Activated CD4-positive, alpha-beta T cell treated with anti-CD3 and anti-CD28 coated beads, Interleukin-2, amount 10 ng/mL, durations not matched to agents 24 days and 14 days (primary cell): ENCODE measurements at regions of chr3 and their contacts with region 1.

Region 1: GRCh38 chr3:107235928-107236315 is 141.3 kb upstream of the CCDC54 start:
- DNase-seq: peak; percentile 88
- H3K4me3 Mint-ChIP-seq: peak overlapping the region; percentile 71
- H3K27ac Mint-ChIP-seq: no peak overlapping the region
- H3K4me1 Mint-ChIP-seq: peaks cover 11% of the 10 kb centered on the region
- H3K27me3 Mint-ChIP-seq: peaks cover 17% of the 10 kb centered on the region

Region 2: GRCh38 chr3:107271787-107272387 is 36.0 kb after region 1 on chr3:
- intact Hi-C with region 1: loop called (anchors 2 kb)
- DNase-seq: no peak
- H3K4me3 Mint-ChIP-seq: no peak overlapping the region
- H3K27ac Mint-ChIP-seq: no peak overlapping the region
- H3K4me1 Mint-ChIP-seq: no peaks in the 10 kb centered on the region
- H3K27me3 Mint-ChIP-seq: peaks cover 35% of the 10 kb centered on the region

Region 3: GRCh38 chr3:107414325-107414964 is 178.5 kb after region 1 on chr3:
- intact Hi-C with region 1: no loop called
- DNase-seq: no peak
- H3K4me3 Mint-ChIP-seq: no peak overlapping the region
- H3K27ac Mint-ChIP-seq: no peak overlapping the region
- H3K4me1 Mint-ChIP-seq: peaks cover 11% of the 10 kb centered on the region
- H3K27me3 Mint-ChIP-seq: peaks cover 9% of the 10 kb centered on the region

Region 4: GRCh38 chr3:107522510-107523288 is 286.8 kb after region 1 on chr3 and contains the start of gene BBX:
- intact Hi-C with region 1: loop called (anchors 2 kb)
- DNase-seq: peak; percentile 98
- H3K4me3 Mint-ChIP-seq: peak within 1 kb of the TSS; percentile 97
- H3K27ac Mint-ChIP-seq: peak within 1 kb of the TSS; percentile 94
- H3K4me1 Mint-ChIP-seq: peaks cover 25% of the 10 kb centered on the region
- H3K27me3 Mint-ChIP-seq: peaks cover 7% of the 10 kb centered on the region
- total RNA-seq, gene BBX: 37.2 and 39.6 TPM in 2 replicates

Region 5: GRCh38 chr3:107740992-107741896 is 505.3 kb after region 1 on chr3:
- intact Hi-C with region 1: loop called (anchors 1 kb)
- DNase-seq: no peak
- H3K4me3 Mint-ChIP-seq: no peak overlapping the region
- H3K27ac Mint-ChIP-seq: no peak overlapping the region
- H3K4me1 Mint-ChIP-seq: no peaks in the 10 kb centered on the region
- H3K27me3 Mint-ChIP-seq: no peaks in the 10 kb centered on the region

Region 6: DNA sequence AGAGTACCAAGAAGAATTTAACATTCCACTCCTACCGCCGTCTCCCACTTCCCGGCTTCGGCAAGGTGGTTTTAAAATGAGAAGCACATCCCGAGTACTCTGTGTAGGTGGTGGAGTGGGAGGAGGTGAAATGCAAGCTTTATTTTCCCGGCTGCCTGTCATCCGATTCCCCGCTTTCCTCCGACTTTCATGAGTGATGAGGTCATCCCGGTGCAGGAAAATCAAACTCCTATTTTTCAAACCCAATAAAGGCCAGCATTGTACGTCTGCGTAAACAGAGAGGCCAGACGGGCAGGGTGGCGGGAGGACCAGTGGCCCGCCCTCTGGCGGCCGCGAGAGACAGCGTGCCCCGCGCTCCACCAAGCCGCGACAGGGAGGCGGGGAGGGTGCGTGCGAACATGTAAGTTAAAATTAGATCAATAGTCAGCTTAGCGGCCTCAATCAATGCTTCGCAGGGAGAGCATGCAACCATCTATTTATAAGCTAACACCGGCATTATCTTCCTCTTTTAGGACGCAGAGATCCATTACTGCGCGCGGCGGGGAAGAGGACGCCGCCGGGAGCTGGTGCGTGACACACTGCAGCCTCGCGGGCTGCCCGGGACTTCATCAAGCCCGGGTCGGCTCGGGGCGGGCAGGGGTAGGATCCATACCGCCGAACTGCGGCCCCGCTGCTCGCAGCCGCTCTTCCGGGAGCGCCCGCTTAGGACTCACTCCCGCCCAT is 691.6 kb after region 1 on chr3:
- intact Hi-C with region 1: loop called (anchors 1 kb)
- DNase-seq: peak; percentile 90
- H3K4me3 Mint-ChIP-seq: peak overlapping the region; percentile 87
- H3K27ac Mint-ChIP-seq: peak overlapping the region; percentile 59
- H3K4me1 Mint-ChIP-seq: peaks cover 13% of the 10 kb centered on the region
- H3K27me3 Mint-ChIP-seq: peaks cover 19% of the 10 kb centered on the region

Region 7: GRCh38 chr3:108589146-108589997 is 1353.5 kb after region 1 on chr3 and contains the starts of genes CIP2A and DZIP3:
- intact Hi-C with region 1: loop called (anchors 5 kb)
- DNase-seq: peak; percentile 95
- H3K4me3 Mint-ChIP-seq: peak within 1 kb of the TSS; percentile 97
- H3K27ac Mint-ChIP-seq: peak within 1 kb of the TSS; percentile 98
- H3K4me1 Mint-ChIP-seq: peaks cover 45% of the 10 kb centered on the region
- H3K27me3 Mint-ChIP-seq: no peaks in the 10 kb centered on the region
- total RNA-seq, gene CIP2A: 48.3 and 58.3 TPM in 2 replicates
- total RNA-seq, gene DZIP3: 4.1 and 4.7 TPM in 2 replicates